ENCODE measurements at regions of chr12 and their contacts with region 1.

Region 1: DNA sequence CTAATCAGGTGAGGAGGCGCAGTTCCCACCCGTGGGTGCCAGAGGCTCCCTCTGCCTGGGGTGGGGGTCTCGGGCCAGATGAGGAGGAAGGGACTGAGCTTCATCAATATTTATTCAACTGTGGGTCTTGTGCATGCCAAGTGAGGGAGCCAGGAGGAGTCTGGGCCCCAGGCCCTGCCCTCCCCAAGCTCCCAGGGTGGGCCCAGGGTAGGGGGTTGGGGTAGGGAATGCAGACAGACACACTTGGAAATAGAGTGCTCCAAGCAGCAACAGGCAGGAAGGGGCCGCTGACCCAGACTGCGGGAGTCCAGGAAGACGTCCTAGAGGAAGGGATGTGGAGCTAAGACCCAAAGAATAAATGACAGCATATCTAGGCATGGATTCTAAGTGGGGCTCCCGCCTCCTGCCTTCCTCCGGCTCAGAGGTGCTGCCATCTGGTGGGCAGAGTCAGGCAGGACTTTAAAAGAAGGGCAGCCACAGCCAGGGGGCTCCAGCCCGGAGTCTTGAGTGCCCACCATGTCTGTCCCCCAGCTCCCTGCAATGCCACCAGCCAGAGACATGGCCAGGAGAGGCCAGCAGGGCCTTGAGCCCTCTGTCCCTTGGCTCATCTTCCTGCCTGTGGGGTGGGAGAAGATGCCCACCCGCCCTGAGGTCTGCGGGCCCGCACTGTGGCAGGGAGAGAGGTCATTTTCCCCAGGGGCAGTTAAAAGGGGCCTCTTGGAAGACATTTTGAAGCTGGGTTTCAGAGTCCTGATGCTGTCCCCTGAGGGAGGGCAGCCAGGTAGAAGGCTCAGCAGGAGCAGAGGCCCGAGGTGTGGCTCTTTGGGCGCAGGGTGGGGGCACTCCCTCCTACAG is 70.1 kb downstream of the PHETA1 start:
- DNase-seq: no peak
- H3K4me3 ChIP-seq: no peak overlapping the region
- H3K27ac ChIP-seq: no peak overlapping the region
- H3K4me1 ChIP-seq: no peaks in the 10 kb centered on the region
- H3K27me3 ChIP-seq: peaks cover 0 to 11% (median 0%) of the 10 kb centered on the region in 3 donors
- CTCF ChIP-seq: peak; percentile 18 to 80 (median 64)
- EP300 ChIP-seq: no peak
- POLR2A ChIP-seq: no peak

Region 2: DNA sequence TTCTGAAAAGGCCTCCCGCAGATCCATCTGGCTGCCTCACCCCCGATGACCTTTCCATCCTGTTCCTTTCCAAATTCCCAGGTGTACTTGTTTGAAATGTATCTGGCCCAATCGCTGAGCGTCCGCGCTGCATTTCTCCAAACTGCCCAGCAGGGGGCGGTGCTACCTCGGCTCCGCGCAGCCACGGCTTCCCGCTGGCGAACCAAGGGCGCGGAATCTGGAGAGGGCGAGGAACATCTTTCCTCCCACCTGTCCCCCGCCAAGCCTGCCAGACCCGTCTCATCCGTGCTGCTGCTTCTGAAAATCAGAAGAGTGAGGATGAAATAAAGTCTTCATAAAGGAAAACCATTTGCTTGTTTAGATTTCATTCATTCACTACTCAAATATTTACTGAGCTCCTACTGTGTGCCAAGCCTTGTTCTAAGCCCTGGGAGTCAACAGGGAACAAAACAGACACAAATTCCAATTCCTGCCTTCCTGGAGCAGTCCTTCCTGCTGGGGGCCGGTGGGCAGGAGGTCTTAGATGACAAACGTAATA is 361.6 kb before region 1 on chr12:
- intact Hi-C with region 1: loop called (anchors 5 kb)
- DNase-seq: no peak
- H3K4me3 ChIP-seq: no peak overlapping the region
- H3K27ac ChIP-seq: no peak overlapping the region
- H3K4me1 ChIP-seq: peaks cover 0 to 8% (median 3%) of the 10 kb centered on the region in 4 donors
- H3K27me3 ChIP-seq: peaks cover 0 to 23% (median 3%) of the 10 kb centered on the region in 3 donors
- CTCF ChIP-seq: peak; percentile 54 to 94 (median 78)
- EP300 ChIP-seq: no peak
- POLR2A ChIP-seq: no peak

Region 3: DNA sequence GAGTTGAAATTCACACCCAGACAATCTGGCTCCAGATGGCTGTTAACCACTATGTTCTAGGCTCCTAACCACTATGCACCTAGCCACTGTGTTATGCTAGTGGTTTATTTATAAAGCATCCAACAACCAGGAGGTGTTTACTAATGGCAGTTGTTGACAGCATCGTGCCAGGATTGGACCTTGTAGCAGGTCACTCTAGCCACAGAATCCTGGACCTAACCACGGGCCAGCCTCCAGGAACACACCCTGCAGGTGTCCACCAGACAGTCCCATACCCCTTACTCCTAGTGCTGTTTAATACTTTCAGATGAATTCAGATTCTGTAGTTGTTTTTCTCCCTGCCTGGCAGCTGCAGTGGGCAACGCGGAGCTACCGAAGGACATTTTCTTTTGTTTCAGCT is 269.1 kb before region 1 on chr12:
- intact Hi-C with region 1: loop called (anchors 5 kb)
- DNase-seq: no peak
- H3K4me3 ChIP-seq: no peak overlapping the region
- H3K27ac ChIP-seq: no peak overlapping the region
- H3K4me1 ChIP-seq: peaks cover 0 to 17% (median 14%) of the 10 kb centered on the region in 4 donors
- H3K27me3 ChIP-seq: peaks cover 15 to 96% (median 30%) of the 10 kb centered on the region in 3 donors
- CTCF ChIP-seq: no peak
- EP300 ChIP-seq: no peak
- POLR2A ChIP-seq: no peak

Region 4: DNA sequence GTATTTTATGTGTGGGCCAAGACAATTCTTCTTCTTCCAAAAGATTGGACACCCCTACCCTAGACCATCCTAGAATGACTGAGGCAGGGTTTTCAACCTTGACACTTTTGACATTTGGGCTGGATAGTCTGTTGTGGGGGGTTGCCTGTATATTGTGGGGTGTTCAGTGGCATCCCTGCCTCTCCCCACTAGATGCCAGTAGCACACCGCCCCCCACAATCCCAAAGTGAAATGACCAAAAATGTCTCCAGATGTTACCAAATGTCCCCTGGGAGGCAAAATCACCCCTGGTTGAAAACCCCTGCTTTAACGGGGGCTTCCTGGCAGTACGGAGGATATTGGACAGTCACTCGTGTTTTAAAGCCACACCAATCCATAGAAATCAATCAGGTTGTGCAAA is 149.5 kb before region 1 on chr12:
- intact Hi-C with region 1: loop called (anchors 10 kb)
- DNase-seq: no peak
- H3K4me3 ChIP-seq: no peak overlapping the region
- H3K27ac ChIP-seq: no peak overlapping the region
- H3K4me1 ChIP-seq: peaks cover 0 to 20% (median 18%) of the 10 kb centered on the region in 4 donors
- H3K27me3 ChIP-seq: peaks cover 0 to 4% (median 0%) of the 10 kb centered on the region in 3 donors
- CTCF ChIP-seq: no peak
- EP300 ChIP-seq: no peak
- POLR2A ChIP-seq: no peak

Region 5: GRCh38 chr12:111248236-111249017 is 50.4 kb before region 1 on chr12:
- intact Hi-C with region 1: no loop called
- DNase-seq: no peak
- H3K4me3 ChIP-seq: no peak overlapping the region
- H3K27ac ChIP-seq: no peak overlapping the region
- H3K4me1 ChIP-seq: no peaks in the 10 kb centered on the region
- H3K27me3 ChIP-seq: peaks cover 0 to 42% (median 0%) of the 10 kb centered on the region in 3 donors
- CTCF ChIP-seq: no peak
- EP300 ChIP-seq: no peak
- POLR2A ChIP-seq: no peak

Region 6: GRCh38 chr12:111339321-111339938 is 40.6 kb after region 1 on chr12:
- intact Hi-C with region 1: no loop called
- DNase-seq: no peak
- H3K4me3 ChIP-seq: no peak overlapping the region
- H3K27ac ChIP-seq: no peak overlapping the region
- H3K4me1 ChIP-seq: no peaks in the 10 kb centered on the region
- H3K27me3 ChIP-seq: no peaks in the 10 kb centered on the region
- CTCF ChIP-seq: no peak
- EP300 ChIP-seq: no peak
- POLR2A ChIP-seq: no peak

Measured in sigmoid colon (tissue), 7 donors.